ENCODE measurements at regions of chr3 and their contacts with region 1.

Region 1: DNA sequence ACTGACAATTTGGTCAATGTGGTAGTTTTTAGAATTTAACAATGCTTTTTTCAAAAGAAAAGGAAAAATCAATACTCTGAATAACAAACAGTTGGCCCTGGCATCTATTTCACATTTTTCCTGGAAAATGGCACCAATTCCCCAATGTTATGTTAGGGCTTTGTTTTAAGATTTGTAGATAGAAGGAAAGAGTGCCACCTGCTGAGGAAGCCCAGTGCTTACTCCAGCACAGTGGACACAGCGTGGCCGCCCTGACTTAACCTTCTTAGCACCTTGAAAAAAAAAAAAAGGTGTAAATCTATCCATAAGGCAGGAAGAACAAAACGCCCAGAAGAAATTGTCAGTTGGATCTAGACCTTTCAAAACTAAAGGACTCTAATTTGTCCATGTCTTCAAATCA is 110.7 kb upstream of the CNTN4 start:
- DNase-seq: peak; percentile 33 to 36
- H3K4me3 ChIP-seq: no peak overlapping the region
- H3K4me1 ChIP-seq: no peaks in the 10 kb centered on the region
- H3K27me3 ChIP-seq: no peaks in the 10 kb centered on the region

Region 2: DNA sequence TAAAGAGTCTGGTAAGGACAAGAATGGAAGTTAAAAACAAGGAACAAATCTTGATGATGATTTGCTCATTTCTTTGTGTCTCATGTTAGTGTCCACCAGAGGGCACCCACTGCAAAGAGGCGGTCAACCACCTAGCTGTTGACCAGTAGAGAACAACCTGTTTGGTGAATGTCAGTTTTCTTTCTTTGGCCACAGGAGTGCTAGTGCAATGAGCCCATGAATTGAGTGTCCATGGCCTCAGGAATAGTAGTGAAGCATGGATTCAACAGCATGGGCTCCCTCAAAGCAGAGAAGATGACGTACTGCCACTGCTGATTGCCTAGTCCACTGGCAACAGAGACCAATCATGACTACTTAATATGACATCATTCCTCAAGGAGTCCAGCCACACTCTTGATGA is 905.9 kb before region 1 on chr3:
- in situ Hi-C with region 1: loop called (anchors 25 kb)
- DNase-seq: peak; percentile 61 to 72
- H3K4me3 ChIP-seq: no peak overlapping the region
- H3K4me1 ChIP-seq: no peaks in the 10 kb centered on the region
- H3K27me3 ChIP-seq: no peaks in the 10 kb centered on the region; the same call in 1 of the 2 replicates